ENCODE measurements at regions of chr1 and their contacts with region 1.

Region 1: DNA sequence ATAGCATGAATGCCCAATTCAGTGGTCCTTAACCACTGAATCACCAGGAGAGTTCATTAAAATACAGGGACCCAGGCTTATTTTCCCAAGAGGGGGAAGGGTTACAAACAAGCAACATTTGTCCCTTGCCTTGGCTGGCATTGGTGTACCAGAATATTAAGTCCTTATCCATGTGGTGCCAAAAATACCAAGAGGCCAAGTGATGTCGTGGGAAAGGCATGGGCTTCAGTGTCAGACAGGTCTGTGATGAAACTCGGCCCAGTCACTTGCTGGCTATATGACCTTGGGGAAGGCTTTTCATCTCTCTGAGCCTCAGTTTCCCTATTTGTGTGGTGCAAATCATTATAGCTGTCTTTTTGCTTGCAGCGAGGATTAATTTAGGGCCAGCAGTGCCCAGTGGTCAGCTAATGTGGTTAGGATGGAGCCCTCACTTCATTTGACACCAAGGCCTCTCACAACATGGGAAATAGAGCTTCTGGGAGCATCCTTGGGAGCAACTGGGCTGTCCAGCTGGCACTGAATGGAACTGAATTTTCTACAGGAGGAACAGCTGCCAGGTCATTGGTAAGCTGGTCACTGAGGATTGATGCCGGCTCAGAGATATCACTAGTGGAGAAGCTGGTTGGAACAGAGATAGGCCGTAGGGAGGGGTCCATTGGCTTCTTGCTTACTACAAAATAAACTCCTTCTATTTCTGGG is 77.2 kb upstream of the PPP2R5A start:
- DNase-seq: no peak
- ATAC-seq: no peak
- H3K4me3 ChIP-seq: no peak overlapping the region
- H3K27ac ChIP-seq: no peak overlapping the region
- H3K4me1 ChIP-seq: peaks cover 0 to 10% of the 10 kb centered on the region in 2 experiments; a peak in 3 of 5 replicates
- H3K27me3 ChIP-seq: no peaks in the 10 kb centered on the region
- CTCF ChIP-seq: no peak
- EP300 ChIP-seq: no peak
- POLR2A ChIP-seq: no peak
- RAD21 ChIP-seq: no peak

Region 2: GRCh38 chr1:211928993-211929637 is 278.9 kb before region 1 on chr1:
- CTCF ChIA-PET with region 1: no interaction called
- POLR2A ChIA-PET with region 1: no interaction called
- in situ Hi-C with region 1: no loop called
- intact Hi-C with region 1: no loop called
- DNase-seq: peak; percentile 49 to 74 (median 58)
- ATAC-seq: peak; percentile 74
- H3K4me3 ChIP-seq: no peak overlapping the region
- H3K27ac ChIP-seq: peak overlapping the region; percentile 68
- H3K4me1 ChIP-seq: peaks cover 7 to 45% of the 10 kb centered on the region in 2 experiments; a peak in 4 of 5 replicates
- H3K27me3 ChIP-seq: no peaks in the 10 kb centered on the region
- CTCF ChIP-seq: no peak
- EP300 ChIP-seq: no peak
- POLR2A ChIP-seq: no peak
- RAD21 ChIP-seq: no peak

Region 3: GRCh38 chr1:212062832-212063438 is 145.0 kb before region 1 on chr1:
- CTCF ChIA-PET with region 1: no interaction called
- POLR2A ChIA-PET with region 1: no interaction called
- in situ Hi-C with region 1: no loop called
- intact Hi-C with region 1: no loop called
- DNase-seq: peak; percentile 39 to 51 (median 41)
- ATAC-seq: peak; percentile 77
- H3K4me3 ChIP-seq: no peak overlapping the region
- H3K27ac ChIP-seq: no peak overlapping the region
- H3K4me1 ChIP-seq: no peaks in the 10 kb centered on the region
- H3K27me3 ChIP-seq: no peaks in the 10 kb centered on the region
- CTCF ChIP-seq: peak; percentile 48 to 78 (median 65); a peak in 5 of 6 replicates
- EP300 ChIP-seq: no peak
- POLR2A ChIP-seq: no peak
- RAD21 ChIP-seq: peak; percentile 70 to 78

Region 4: DNA sequence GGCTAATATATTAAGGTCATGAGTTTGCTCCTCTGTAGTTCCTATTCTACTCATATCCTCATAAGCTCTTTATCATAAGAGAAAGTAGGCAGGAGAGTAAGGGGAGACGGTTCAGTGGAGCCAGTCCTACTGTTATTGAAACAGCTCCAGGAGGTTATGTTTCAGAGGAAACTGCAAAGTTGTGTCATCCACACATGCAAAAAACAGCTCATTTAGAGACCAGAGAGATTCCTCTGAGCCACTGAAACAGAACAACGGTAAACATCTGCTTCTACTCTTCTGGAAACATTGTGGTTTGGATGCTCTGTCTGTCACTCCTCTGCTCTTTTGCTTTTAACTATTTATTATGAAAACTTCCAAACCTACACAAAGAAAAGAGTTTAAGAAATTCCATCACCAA is 10.9 kb after region 1 on chr1:
- CTCF ChIA-PET with region 1: no interaction called
- POLR2A ChIA-PET with region 1: interaction called, 11 read pairs
- in situ Hi-C with region 1: no loop called
- intact Hi-C with region 1: no loop called
- DNase-seq: no peak
- ATAC-seq: no peak; the same call in 2 of the 3 replicates
- H3K4me3 ChIP-seq: no peak overlapping the region
- H3K27ac ChIP-seq: no peak overlapping the region
- H3K4me1 ChIP-seq: peaks cover 13 to 33% of the 10 kb centered on the region in 2 experiments; a peak in 3 of 5 replicates
- H3K27me3 ChIP-seq: no peaks in the 10 kb centered on the region
- CTCF ChIP-seq: no peak
- EP300 ChIP-seq: no peak
- POLR2A ChIP-seq: no peak
- RAD21 ChIP-seq: no peak

Measured in K562 (cell line).